ENCODE measurements at regions of chr7 and their contacts with region 1.

Region 1: GRCh38 chr7:992709-993607 is 10.0 kb downstream of the CYP2W1 start:
- DNase-seq: peak; percentile 95 to 97 (median 97)
- H3K4me3 ChIP-seq: no peak overlapping the region
- H3K27ac ChIP-seq: no peak overlapping the region
- H3K4me1 ChIP-seq: peaks cover 0 to 36% (median 26%) of the 10 kb centered on the region in 4 experiments
- H3K27me3 ChIP-seq: peaks cover 0 to 11% (median 0%) of the 10 kb centered on the region in 5 experiments

Region 2: DNA sequence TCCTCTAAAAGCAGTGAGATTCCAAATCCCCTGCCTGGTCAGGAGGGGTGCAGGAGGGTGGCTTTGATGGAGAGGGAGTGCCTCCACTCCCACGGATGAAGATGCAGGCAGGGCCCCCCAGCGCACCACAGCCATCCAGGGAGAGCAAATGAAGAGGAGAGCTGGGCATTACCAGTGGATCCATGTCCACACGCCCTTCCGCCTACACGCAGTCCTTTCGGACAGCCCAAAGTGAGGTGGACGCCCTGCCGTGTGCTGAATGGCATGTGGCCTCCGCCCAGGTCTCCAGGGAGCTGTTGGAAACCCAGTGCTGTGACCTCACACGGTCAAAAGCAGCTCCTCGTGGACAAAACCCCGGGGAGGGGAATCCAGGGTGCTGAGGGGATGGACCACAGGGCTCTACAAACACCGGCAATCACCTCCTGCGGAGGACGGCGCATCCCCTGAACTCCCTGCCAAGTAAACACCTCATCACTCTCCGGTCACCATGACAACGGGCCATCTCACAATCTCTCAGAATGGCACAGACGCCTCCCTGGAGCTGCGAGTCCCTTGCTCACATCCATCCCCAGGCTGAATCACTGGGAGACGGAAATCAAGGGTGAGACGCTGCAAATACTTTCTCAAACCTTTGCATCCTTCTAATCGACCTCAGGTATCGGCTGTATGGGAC is 301.5 kb before region 1 on chr7:
- CTCF ChIA-PET with region 1: no interaction called
- POLR2A ChIA-PET with region 1: no interaction called
- DNase-seq: no peak
- H3K4me3 ChIP-seq: no peak overlapping the region
- H3K27ac ChIP-seq: no peak overlapping the region
- H3K4me1 ChIP-seq: no peaks in the 10 kb centered on the region
- H3K27me3 ChIP-seq: no peaks in the 10 kb centered on the region

Region 3: DNA sequence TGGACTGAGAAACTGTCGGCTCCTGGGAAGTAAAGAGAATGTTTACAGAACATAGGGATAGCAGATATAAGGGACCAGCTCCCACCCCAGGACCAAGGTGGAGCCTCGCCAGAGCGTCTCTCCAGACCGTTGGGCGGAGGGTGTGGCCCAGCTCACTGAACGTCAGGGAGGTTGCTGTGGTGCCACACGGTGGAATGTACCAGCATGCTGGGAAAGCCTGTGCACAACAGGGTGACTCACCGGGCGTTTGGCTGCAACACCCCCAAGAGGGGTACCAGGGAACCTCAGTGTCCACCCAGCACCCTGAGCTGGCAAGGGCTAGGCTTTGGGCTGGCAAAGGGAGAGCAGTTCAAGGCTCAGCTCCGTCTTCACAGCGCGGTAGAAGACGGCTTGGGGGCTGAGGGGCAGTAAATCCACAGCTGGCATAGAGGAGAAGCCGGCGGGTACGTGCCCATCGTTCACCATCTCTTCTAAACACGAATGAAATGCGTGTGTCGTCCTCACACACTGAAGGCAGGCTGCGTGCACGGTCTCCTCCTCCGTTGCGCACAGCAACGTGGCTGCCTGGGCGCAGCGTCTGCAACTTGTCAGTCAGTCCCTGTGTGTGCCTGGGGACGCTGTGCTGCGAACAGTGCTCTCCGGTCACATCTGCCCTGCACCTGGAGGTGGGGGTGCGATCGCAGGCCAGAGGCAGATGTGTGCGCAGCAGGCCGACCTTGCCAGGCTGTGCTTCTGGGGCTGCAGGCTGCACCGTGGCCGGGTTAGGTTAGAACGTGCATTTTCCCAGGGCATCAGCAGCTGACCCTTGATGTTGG is 125.1 kb before region 1 on chr7:
- CTCF ChIA-PET with region 1: no interaction called
- POLR2A ChIA-PET with region 1: no interaction called
- DNase-seq: no peak
- H3K4me3 ChIP-seq: no peak overlapping the region
- H3K27ac ChIP-seq: no peak overlapping the region
- H3K4me1 ChIP-seq: no peaks in the 10 kb centered on the region
- H3K27me3 ChIP-seq: no peaks in the 10 kb centered on the region

Region 4: GRCh38 chr7:894164-894867 is 98.6 kb before region 1 on chr7:
- CTCF ChIA-PET with region 1: no interaction called
- POLR2A ChIA-PET with region 1: no interaction called
- DNase-seq: no peak
- H3K4me3 ChIP-seq: no peak overlapping the region
- H3K27ac ChIP-seq: no peak overlapping the region
- H3K4me1 ChIP-seq: no peaks in the 10 kb centered on the region
- H3K27me3 ChIP-seq: no peaks in the 10 kb centered on the region

Region 5: GRCh38 chr7:1020849-1021251 is 27.9 kb after region 1 on chr7:
- CTCF ChIA-PET with region 1: interaction called, 33 read pairs
- POLR2A ChIA-PET with region 1: no interaction called
- DNase-seq: no peak
- H3K4me3 ChIP-seq: no peak overlapping the region
- H3K27ac ChIP-seq: no peak overlapping the region
- H3K4me1 ChIP-seq: peaks cover 0 to 26% (median 6%) of the 10 kb centered on the region in 4 experiments
- H3K27me3 ChIP-seq: no peaks in the 10 kb centered on the region

Region 6: GRCh38 chr7:1059200-1060091 is 66.5 kb after region 1 on chr7:
- CTCF ChIA-PET with region 1: interaction called, 160 read pairs
- POLR2A ChIA-PET with region 1: no interaction called
- DNase-seq: peak in 2 of 3 donors; percentile 72 to 80
- H3K4me3 ChIP-seq: peak overlapping the region in 3 of 7 experiments; percentile 53 to 59 (median 54)
- H3K27ac ChIP-seq: no peak overlapping the region
- H3K4me1 ChIP-seq: peaks cover 0 to 81% (median 78%) of the 10 kb centered on the region in 4 experiments
- H3K27me3 ChIP-seq: no peaks in the 10 kb centered on the region

Region 7: DNA sequence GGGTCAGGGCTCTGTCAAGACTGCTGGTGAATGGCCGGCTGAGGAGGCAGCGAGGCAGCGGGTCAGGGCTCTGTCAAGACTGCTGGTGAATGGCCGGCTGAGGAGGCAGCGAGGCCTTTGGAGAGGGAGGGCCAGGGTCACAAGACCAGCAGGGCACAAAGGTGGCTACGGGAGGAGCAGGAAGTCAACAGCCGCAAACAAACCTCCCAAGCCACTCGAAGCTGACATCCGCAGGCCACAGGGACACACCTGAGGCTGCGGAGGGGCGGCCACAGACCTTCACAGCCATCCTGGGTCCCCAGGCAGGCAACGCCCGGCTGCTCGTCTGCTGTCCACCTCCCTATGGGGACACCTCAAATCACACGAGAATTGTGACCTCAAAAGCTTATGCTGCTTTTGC is 86.0 kb after region 1 on chr7:
- CTCF ChIA-PET with region 1: interaction called, 12 read pairs
- POLR2A ChIA-PET with region 1: no interaction called
- DNase-seq: no peak
- H3K4me3 ChIP-seq: no peak overlapping the region
- H3K27ac ChIP-seq: no peak overlapping the region
- H3K4me1 ChIP-seq: peaks cover 0 to 11% (median 0%) of the 10 kb centered on the region in 4 experiments
- H3K27me3 ChIP-seq: no peaks in the 10 kb centered on the region

Region 8: DNA sequence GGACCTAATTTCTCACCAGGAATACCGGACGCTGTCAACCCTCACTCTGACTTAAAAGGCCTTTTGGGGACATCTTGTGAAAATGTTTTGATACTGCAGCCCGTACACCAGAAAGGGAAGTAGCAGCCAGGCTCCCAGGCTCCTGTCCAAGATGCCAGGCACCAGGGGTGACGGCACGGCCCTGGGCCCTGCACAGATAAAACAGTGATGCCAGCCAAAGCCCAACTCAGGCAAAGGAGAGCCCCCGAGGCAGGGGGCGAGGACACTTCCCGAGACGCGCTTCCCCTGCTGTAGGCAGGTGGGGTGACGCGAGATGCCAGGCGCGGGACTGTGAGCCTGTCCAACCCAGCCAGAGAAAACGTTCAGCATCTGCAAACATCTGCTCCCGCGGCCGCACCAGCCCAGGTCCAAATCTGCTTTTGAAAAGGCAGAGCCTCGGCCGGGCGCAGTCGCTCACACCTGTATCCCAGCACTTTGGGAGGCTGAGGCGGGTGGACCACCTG is 151.4 kb after region 1 on chr7:
- CTCF ChIA-PET with region 1: interaction called, 23 read pairs
- POLR2A ChIA-PET with region 1: interaction called, 3 read pairs
- DNase-seq: peak; percentile 56 to 60 (median 58)
- H3K4me3 ChIP-seq: peak overlapping the region in 1 of 7 experiments; percentile 42
- H3K27ac ChIP-seq: no peak overlapping the region
- H3K4me1 ChIP-seq: peaks cover 0 to 7% (median 2%) of the 10 kb centered on the region in 4 experiments
- H3K27me3 ChIP-seq: no peaks in the 10 kb centered on the region